ENCODE measurements at regions of chr11 and their contacts with region 1.

Region 1: GRCh38 chr11:111777094-111778046 is 11.2 kb upstream of the PPP2R1B start:
- H3K4me3 ChIP-seq: no peak overlapping the region
- H3K27ac ChIP-seq: no peak overlapping the region
- H3K4me1 ChIP-seq: no peaks in the 10 kb centered on the region
- CTCF ChIP-seq: peak; percentile 22; the same call in 1 of the 2 replicates

Region 2: DNA sequence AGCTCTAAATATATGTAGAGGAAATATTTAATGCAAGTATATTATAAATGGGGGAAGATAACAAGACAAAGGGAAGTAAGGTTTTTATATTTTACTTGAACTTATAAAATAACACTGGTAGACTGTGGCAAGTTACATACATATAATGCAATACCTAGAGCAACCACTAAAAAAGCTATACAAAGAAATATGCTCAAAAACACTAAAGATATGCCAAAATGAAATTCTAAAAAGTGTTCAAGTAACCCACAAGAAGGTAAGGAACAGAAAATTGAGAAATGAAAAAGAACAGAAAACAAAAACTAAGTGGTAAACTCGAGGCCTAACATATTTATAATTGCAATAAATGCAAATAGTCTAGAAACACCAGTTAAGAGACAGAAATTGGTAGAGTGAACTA is 297.7 kb before region 1 on chr11:
- CTCF ChIA-PET with region 1: no interaction called
- POLR2A ChIA-PET with region 1: no interaction called
- H3K4me3 ChIP-seq: no peak overlapping the region
- H3K27ac ChIP-seq: no peak overlapping the region
- H3K4me1 ChIP-seq: no peaks in the 10 kb centered on the region
- CTCF ChIP-seq: no peak

Region 3: GRCh38 chr11:111566324-111566723 is 211.0 kb before region 1 on chr11:
- CTCF ChIA-PET with region 1: interaction called, 21 read pairs
- POLR2A ChIA-PET with region 1: no interaction called
- H3K4me3 ChIP-seq: no peak overlapping the region
- H3K27ac ChIP-seq: no peak overlapping the region
- H3K4me1 ChIP-seq: no peaks in the 10 kb centered on the region
- CTCF ChIP-seq: no peak

Region 4: DNA sequence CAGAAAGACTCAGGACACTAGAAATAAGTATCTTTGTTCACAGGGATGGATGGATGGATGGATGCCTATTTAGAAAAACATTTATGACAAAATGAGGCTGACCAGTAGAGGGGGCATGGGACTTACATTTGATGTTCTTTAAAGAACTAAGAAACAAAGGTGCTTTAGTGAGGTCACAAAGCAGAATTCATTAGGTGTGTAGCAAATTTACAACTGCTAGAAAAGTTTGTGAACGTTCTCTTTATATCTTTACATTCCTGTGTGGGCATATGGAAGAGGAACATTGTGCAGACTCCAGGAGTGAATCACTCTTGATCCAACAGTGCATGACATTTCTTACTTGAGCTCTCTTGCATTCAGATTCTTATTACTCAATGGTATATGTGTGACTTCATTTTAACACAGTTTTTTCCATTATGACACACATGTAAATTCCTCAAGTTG is 191.0 kb before region 1 on chr11:
- CTCF ChIA-PET with region 1: interaction called, 38 read pairs
- POLR2A ChIA-PET with region 1: no interaction called
- H3K4me3 ChIP-seq: no peak overlapping the region
- H3K27ac ChIP-seq: no peak overlapping the region
- H3K4me1 ChIP-seq: no peaks in the 10 kb centered on the region
- CTCF ChIP-seq: no peak

Region 5: DNA sequence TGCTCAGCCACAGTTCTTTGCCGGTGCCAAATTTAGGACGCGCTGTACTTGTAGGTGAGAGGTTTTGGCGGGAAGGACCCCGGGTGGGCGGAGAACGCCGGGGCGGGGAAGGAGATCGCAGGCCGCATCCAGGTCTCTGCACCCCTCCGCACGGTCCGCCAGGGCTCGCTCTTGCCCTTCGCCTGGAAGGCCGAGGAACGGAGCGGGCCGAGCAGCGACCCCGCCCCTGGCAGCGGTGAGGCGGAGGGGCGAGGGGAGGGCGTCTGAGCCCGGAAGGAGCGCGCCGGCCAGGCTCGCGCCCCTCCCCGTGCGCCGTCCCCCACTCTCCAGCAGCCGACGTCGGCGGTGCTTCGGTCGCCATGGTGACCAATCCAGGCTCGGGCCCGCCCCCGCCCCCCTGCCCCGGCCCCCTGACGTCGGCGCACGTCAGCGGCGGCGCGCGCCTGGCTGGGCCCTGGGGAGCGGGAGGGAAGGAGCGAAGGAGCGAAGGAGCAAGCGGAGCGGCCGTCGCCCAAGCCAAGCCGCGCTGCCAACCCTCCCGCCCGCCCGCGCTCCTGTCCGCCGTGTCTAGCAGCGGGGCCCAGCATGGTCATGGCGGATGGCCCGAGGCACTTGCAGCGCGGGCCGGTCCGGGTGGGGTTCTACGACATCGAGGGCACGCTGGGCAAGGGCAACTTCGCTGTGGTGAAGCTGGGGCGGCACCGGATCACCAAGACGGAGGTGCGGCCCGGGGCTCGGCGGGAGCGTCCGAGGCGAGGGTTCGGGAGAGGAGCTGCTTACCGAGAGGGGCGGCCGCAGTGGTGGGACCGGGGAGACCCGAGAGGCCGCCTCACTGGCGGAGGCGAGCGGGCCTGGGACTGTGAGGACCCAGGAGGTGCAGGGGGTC is 175.1 kb before region 1 on chr11 and contains the start of gene SIK2:
- CTCF ChIA-PET with region 1: interaction called, 31 read pairs
- POLR2A ChIA-PET with region 1: no interaction called
- H3K4me3 ChIP-seq: peak within 1 kb of the TSS; percentile 66
- H3K27ac ChIP-seq: peak within 1 kb of the TSS; percentile 81
- H3K4me1 ChIP-seq: no peaks in the 10 kb centered on the region
- CTCF ChIP-seq: peak; percentile 98

Region 6: GRCh38 chr11:111766093-111766833 is 11.1 kb before region 1 on chr11 and contains the start of gene PPP2R1B:
- CTCF ChIA-PET with region 1: interaction called, 46 read pairs
- POLR2A ChIA-PET with region 1: no interaction called
- H3K4me3 ChIP-seq: peak within 1 kb of the TSS; percentile 99
- H3K27ac ChIP-seq: peak within 1 kb of the TSS; percentile 33; the same call in 1 of the 2 replicates
- H3K4me1 ChIP-seq: no peaks in the 10 kb centered on the region
- CTCF ChIP-seq: no peak

Region 7: GRCh38 chr11:111797145-111797581 is 19.8 kb after region 1 on chr11:
- CTCF ChIA-PET with region 1: interaction called, 12 read pairs
- POLR2A ChIA-PET with region 1: no interaction called
- H3K4me3 ChIP-seq: no peak overlapping the region
- H3K27ac ChIP-seq: no peak overlapping the region
- H3K4me1 ChIP-seq: no peaks in the 10 kb centered on the region
- CTCF ChIP-seq: no peak

Region 8: DNA sequence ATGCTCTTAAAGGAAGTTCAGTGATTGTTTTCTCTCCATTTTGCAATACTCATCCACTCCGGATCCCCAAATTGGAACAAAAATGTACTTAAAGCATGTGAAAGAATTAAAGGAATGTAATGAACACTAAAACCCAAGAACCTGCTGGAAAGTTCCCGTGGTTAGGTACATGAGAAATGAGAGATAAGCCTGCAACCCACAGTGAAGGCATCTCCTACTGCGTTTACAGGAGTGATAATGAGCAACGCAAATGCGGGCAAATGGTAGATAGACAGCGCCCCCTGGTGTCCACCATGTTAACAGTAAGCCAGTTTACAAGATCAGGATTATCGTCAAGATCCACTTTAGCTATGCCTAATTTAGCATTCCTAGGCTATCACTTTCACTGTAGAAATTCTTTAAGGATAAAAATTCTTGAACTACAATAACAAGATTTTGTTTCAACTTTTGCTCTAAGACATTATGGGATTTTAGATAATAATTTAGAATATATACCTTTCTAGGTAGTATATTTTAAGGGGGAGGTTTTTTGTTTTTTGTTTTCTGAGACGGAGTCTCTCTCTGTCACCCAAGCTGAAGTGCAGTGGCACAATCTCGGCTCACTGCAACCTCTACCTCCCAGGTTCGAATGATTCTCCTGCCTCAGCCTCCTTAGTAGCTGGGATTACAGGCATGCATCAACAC is 64.1 kb after region 1 on chr11:
- CTCF ChIA-PET with region 1: interaction called, 17 read pairs
- POLR2A ChIA-PET with region 1: no interaction called
- H3K4me3 ChIP-seq: no peak overlapping the region
- H3K27ac ChIP-seq: no peak overlapping the region
- H3K4me1 ChIP-seq: no peaks in the 10 kb centered on the region
- CTCF ChIP-seq: peak; percentile 53

Measured in HEK293 (cell line).